Mammary epithelial cell (primary cell): ENCODE measurements at regions of chr1 and their contacts with region 1.

Region 1: DNA sequence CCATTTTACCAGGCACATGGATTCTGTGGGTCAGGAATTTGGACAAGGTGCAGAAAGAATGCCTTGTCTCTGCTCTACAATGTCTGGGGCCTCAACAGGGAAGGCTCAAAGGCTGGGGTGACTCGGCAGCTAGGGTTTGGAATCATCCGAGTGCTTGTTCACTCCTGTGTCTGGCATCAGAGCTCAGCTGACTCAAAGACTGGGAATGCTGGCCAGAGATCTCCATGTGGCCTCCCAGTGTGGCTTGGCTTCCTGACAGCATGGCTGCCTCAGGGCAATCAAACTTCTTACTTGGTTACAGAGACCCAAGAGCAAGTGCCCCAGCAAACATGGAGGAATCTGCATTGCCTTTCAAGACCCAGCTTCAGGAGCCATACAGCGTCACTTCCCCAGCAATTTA is 110.5 kb downstream of the TOMM20 start:
- DNase-seq: peak; percentile 99
- H3K4me3 ChIP-seq: no peak overlapping the region
- H3K27ac ChIP-seq: peak overlapping the region; percentile 92
- H3K4me1 ChIP-seq: peaks cover 26% of the 10 kb centered on the region
- H3K27me3 ChIP-seq: no peaks in the 10 kb centered on the region
- CTCF ChIP-seq: no peak

Region 2: GRCh38 chr1:234925440-234926263 is 92.5 kb before region 1 on chr1:
- CTCF ChIA-PET with region 1: no interaction called
- dilution Hi-C with region 1: no loop called
- in situ Hi-C with region 1: no loop called
- intact Hi-C with region 1: loop called (anchors 5 kb)
- DNase-seq: peak; percentile 99
- H3K4me3 ChIP-seq: no peak overlapping the region
- H3K27ac ChIP-seq: peak overlapping the region; percentile 60
- H3K4me1 ChIP-seq: peaks cover 16% of the 10 kb centered on the region
- H3K27me3 ChIP-seq: no peaks in the 10 kb centered on the region
- CTCF ChIP-seq: no peak